ENCODE measurements at regions of chr5 and their contacts with region 1.

Region 1: GRCh38 chr5:71508751-71509150 is 53.3 kb downstream of the BDP1 start:
- DNase-seq: no peak
- ATAC-seq: no peak
- H3K4me3 Mint-ChIP-seq: no peak overlapping the region
- H3K27ac Mint-ChIP-seq: no peak overlapping the region
- H3K4me1 Mint-ChIP-seq: no peaks in the 10 kb centered on the region
- H3K27me3 Mint-ChIP-seq: no peaks in the 10 kb centered on the region

Region 2: GRCh38 chr5:71492817-71493615 is 15.7 kb before region 1 on chr5:
- CTCF ChIA-PET with region 1: interaction called, 5 read pairs
- POLR2A ChIA-PET with region 1: no interaction called
- intact Hi-C with region 1: loop called in 1 of 2 experiments (anchors 2 kb)
- DNase-seq: no peak
- ATAC-seq: no peak
- H3K4me3 Mint-ChIP-seq: no peak overlapping the region
- H3K27ac Mint-ChIP-seq: peak overlapping the region; percentile 7
- H3K4me1 Mint-ChIP-seq: no peaks in the 10 kb centered on the region
- H3K27me3 Mint-ChIP-seq: no peaks in the 10 kb centered on the region

Region 3: GRCh38 chr5:71533614-71534013 is 24.9 kb after region 1 on chr5:
- CTCF ChIA-PET with region 1: no interaction called
- POLR2A ChIA-PET with region 1: no interaction called
- intact Hi-C with region 1: no loop called
- DNase-seq: no peak
- ATAC-seq: peak; percentile 89
- H3K4me3 Mint-ChIP-seq: no peak overlapping the region
- H3K27ac Mint-ChIP-seq: peak overlapping the region; percentile 59
- H3K4me1 Mint-ChIP-seq: peaks cover 10% of the 10 kb centered on the region
- H3K27me3 Mint-ChIP-seq: no peaks in the 10 kb centered on the region